CD8-positive, alpha-beta memory T cell (primary cell): ENCODE measurements at regions of chr5 and their contacts with region 1.

Region 1: DNA sequence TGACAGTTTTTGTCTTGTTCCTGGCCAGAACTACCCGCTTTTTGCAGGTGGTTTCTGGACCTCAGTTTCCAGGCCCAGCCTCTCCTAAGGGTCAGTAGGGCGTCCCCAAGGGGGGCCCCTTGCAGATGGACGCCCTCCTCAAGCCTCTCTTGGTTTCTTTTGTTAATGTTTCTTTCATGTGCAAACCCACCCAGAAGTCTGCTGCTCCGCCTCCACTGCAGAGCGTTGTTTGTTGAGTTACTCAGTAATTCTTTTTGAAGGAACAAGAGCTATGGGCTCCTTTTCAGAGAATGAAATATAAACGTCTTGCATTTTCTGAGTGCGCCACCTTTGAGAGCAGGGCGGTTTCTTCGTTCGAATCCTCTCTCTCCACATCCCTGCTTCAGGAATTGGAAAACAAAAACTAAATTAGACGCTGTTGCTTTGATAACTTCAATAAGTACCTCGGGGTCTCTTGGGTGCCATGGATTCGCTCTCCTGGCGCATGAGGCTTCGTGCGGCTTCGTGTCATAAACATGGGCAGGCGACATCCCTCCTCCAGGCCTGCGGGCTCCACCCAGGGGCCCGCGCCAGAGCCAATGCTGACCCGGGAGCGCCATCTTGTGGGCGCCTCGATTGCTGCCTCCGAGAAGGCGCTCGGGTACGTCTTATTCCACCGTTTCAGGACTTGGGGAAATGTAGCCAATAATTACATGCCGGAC is 38.3 kb upstream of the CKMT2 start:
- DNase-seq: peak; percentile 64 to 79 (median 67)
- H3K4me3 ChIP-seq: no peak overlapping the region
- H3K4me3 Mint-ChIP-seq: peak overlapping the region in 4 of 7 donors; percentile 50 to 67 (median 54)
- H3K27ac ChIP-seq: no peak overlapping the region
- H3K27ac Mint-ChIP-seq: peak overlapping the region in 4 of 8 donors; percentile 41 to 85 (median 65)
- H3K4me1 ChIP-seq: no peaks in the 10 kb centered on the region
- H3K4me1 Mint-ChIP-seq: peaks cover 9 to 10% (median 9%) of the 10 kb centered on the region in 3 donors
- H3K27me3 ChIP-seq: no peaks in the 10 kb centered on the region
- H3K27me3 Mint-ChIP-seq: peaks cover 0 to 5% of the 10 kb centered on the region in 2 donors

Region 2: GRCh38 chr5:80686757-80687156 is 508.0 kb before region 1 on chr5:
- CTCF ChIA-PET with region 1: interaction called, 11 read pairs
- POLR2A ChIA-PET with region 1: no interaction called
- DNase-seq: peak in 2 of 5 donors; percentile 25 to 29
- H3K4me3 ChIP-seq: no peak overlapping the region
- H3K4me3 Mint-ChIP-seq: no peak overlapping the region
- H3K27ac ChIP-seq: no peak overlapping the region
- H3K27ac Mint-ChIP-seq: no peak overlapping the region
- H3K4me1 ChIP-seq: no peaks in the 10 kb centered on the region
- H3K4me1 Mint-ChIP-seq: peaks cover 15 to 58% (median 28%) of the 10 kb centered on the region in 3 donors
- H3K27me3 ChIP-seq: no peaks in the 10 kb centered on the region
- H3K27me3 Mint-ChIP-seq: no peaks in the 10 kb centered on the region

Region 3: DNA sequence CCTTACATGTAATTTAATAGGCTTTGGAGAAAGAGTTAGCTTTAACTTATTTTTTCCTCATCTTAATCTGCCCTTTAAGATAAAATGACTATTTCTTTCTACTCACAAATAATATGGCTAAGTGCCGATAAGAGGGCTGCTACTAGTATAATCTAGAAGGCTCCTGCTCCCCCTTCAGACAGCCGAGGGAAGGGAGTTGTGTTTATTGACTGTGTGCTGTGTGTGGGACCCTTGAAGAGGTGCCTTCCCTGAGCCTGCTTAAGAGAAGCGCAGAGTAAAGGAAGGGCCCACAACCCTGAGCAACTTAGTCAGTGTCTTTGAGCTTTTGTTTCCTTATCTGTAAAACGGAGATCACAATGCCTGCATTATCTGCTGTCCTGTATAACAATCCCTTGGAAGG is 10.3 kb after region 1 on chr5:
- CTCF ChIA-PET with region 1: interaction called, 10 read pairs
- POLR2A ChIA-PET with region 1: no interaction called
- DNase-seq: no peak
- H3K4me3 ChIP-seq: no peak overlapping the region
- H3K4me3 Mint-ChIP-seq: no peak overlapping the region
- H3K27ac ChIP-seq: no peak overlapping the region
- H3K27ac Mint-ChIP-seq: no peak overlapping the region
- H3K4me1 ChIP-seq: no peaks in the 10 kb centered on the region
- H3K4me1 Mint-ChIP-seq: no peaks in the 10 kb centered on the region
- H3K27me3 ChIP-seq: no peaks in the 10 kb centered on the region
- H3K27me3 Mint-ChIP-seq: no peaks in the 10 kb centered on the region